Stomach (tissue), 19 donors: ENCODE measurements at regions of chr3 and their contacts with region 1.

Region 1: GRCh38 chr3:57078344-57078634 is 17.8 kb downstream of the SPATA12 start:
- DNase-seq: peak in 1 of 2 donors; percentile 49
- H3K4me3 ChIP-seq: peak overlapping the region; percentile 67 to 89 (median 78)
- H3K27ac ChIP-seq: peak overlapping the region; percentile 22 to 83 (median 78)
- H3K4me1 ChIP-seq: peaks cover 6 to 32% (median 26%) of the 10 kb centered on the region in 4 donors
- H3K27me3 ChIP-seq: peaks cover 0 to 21% (median 0%) of the 10 kb centered on the region in 3 donors
- CTCF ChIP-seq: no peak
- EP300 ChIP-seq: no peak
- POLR2A ChIP-seq: no peak

Region 2: GRCh38 chr3:56702490-56703315 is 375.6 kb before region 1 on chr3:
- intact Hi-C with region 1: loop called (anchors 10 kb)
- DNase-seq: peak; percentile 45 to 91
- H3K4me3 ChIP-seq: no peak overlapping the region
- H3K27ac ChIP-seq: no peak overlapping the region
- H3K4me1 ChIP-seq: peaks cover 0 to 8% (median 2%) of the 10 kb centered on the region in 4 donors
- H3K27me3 ChIP-seq: no peaks in the 10 kb centered on the region
- CTCF ChIP-seq: peak in 5 of 7 experiments; percentile 64 to 86 (median 82)
- EP300 ChIP-seq: no peak
- POLR2A ChIP-seq: no peak

Region 3: GRCh38 chr3:57007513-57008460 is 70.5 kb before region 1 on chr3:
- intact Hi-C with region 1: loop called (anchors 10 kb)
- DNase-seq: peak; percentile 56 to 76
- H3K4me3 ChIP-seq: no peak overlapping the region
- H3K27ac ChIP-seq: peak overlapping the region; percentile 35 to 88 (median 81)
- H3K4me1 ChIP-seq: peaks cover 22 to 55% (median 34%) of the 10 kb centered on the region in 4 donors
- H3K27me3 ChIP-seq: no peaks in the 10 kb centered on the region
- CTCF ChIP-seq: no peak
- EP300 ChIP-seq: no peak
- POLR2A ChIP-seq: no peak

Region 4: DNA sequence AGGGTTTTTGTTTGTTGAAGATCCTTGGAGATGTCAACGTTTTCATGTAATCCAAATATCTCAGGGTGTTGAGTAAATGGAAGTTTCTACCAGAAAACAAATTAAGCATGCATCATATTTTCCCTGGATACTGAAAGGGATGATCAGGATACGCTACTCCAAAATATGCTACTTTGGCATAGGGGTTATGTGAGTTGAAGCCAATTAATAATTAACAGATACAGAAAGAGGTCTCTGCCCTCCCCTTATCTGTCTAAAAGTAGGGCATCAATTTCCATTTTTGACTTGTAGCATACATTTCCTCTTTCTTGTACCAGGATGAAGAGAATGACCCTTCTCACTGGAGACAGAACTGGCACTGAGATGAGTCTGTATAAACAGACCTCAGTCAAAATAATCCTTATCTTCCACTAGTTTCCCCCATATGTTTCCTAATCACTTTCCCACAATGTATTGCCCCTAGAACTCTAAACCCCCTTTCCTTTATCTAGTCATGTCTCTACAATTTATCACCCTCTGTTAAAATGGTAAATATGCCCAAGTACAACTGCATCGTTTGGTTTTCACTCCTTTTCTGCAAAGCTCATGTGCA is 231.6 kb after region 1 on chr3:
- intact Hi-C with region 1: no loop called
- DNase-seq: no peak
- H3K4me3 ChIP-seq: no peak overlapping the region
- H3K27ac ChIP-seq: no peak overlapping the region
- H3K4me1 ChIP-seq: no peaks in the 10 kb centered on the region
- H3K27me3 ChIP-seq: peaks cover 0 to 6% (median 0%) of the 10 kb centered on the region in 3 donors
- CTCF ChIP-seq: no peak
- EP300 ChIP-seq: no peak
- POLR2A ChIP-seq: no peak